CD8-positive, alpha-beta T cell (primary cell): ENCODE measurements at regions of chr3 and their contacts with region 1.

Region 1: GRCh38 chr3:15629860-15630597 is 28.5 kb downstream of the BTD start:
- DNase-seq: peak; percentile 34 to 87 (median 60)
- ATAC-seq: peak; percentile 100
- H3K4me3 ChIP-seq: no peak overlapping the region
- H3K4me3 Mint-ChIP-seq: peak overlapping the region; percentile 64
- H3K27ac ChIP-seq: no peak overlapping the region
- H3K27ac Mint-ChIP-seq: peak overlapping the region; percentile 16
- H3K4me1 ChIP-seq: peaks cover 3% of the 10 kb centered on the region
- H3K4me1 Mint-ChIP-seq: peaks cover 23% of the 10 kb centered on the region
- H3K27me3 ChIP-seq: no peaks in the 10 kb centered on the region
- H3K27me3 Mint-ChIP-seq: no peaks in the 10 kb centered on the region
- CTCF ChIP-seq: peak; percentile 60

Region 2: GRCh38 chr3:15673536-15673935 is 43.5 kb after region 1 on chr3:
- CTCF ChIA-PET with region 1: interaction called, 11 read pairs
- POLR2A ChIA-PET with region 1: no interaction called
- intact Hi-C with region 1: loop called (anchors 2 to 5 kb)
- DNase-seq: no peak
- ATAC-seq: no peak
- H3K4me3 ChIP-seq: no peak overlapping the region
- H3K4me3 Mint-ChIP-seq: no peak overlapping the region
- H3K27ac ChIP-seq: no peak overlapping the region
- H3K27ac Mint-ChIP-seq: no peak overlapping the region
- H3K4me1 ChIP-seq: no peaks in the 10 kb centered on the region
- H3K4me1 Mint-ChIP-seq: peaks cover 5% of the 10 kb centered on the region
- H3K27me3 ChIP-seq: no peaks in the 10 kb centered on the region
- H3K27me3 Mint-ChIP-seq: no peaks in the 10 kb centered on the region
- CTCF ChIP-seq: no peak

Region 3: DNA sequence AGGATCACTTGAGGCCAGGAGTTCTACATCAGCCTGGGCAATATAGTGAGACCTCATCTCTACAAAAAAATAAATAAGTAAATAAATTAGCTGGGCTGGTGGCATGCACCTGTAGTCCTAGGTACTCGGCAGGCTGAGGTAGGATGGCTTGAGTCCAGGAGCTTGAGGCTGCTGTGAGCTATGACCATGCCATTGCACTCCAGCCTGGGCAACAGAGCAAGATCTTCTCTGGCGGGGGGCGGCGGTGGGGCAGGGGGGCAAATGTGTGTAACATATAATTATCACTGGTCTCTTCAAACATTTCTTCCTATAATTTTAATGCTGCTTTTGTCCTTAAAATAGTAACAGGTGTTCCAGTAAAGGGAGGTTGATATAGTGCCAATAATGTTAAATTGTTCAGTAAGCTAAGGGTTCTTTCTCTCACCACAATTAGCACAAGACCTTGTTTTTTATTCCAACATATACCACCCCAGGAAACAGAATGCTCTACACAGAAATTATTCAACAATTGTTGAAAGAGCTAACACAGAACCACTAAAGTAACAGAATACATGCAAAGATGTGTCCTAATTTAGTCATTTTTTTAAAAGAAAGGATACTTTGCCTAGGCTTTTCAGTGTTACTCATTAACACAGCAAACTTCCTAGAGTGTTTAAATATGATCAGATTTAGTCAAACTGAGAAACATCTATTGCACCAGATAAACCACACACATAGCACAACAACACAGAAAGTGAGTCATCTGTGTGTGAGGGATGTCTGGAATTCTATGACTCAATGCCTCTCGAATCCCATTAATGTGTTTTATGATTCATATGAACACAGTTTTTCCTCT is 138.6 kb after region 1 on chr3:
- CTCF ChIA-PET with region 1: no interaction called
- POLR2A ChIA-PET with region 1: no interaction called
- intact Hi-C with region 1: no loop called
- DNase-seq: peak in 1 of 9 experiments; percentile 11
- ATAC-seq: no peak
- H3K4me3 ChIP-seq: no peak overlapping the region
- H3K4me3 Mint-ChIP-seq: no peak overlapping the region
- H3K27ac ChIP-seq: no peak overlapping the region
- H3K27ac Mint-ChIP-seq: no peak overlapping the region
- H3K4me1 ChIP-seq: no peaks in the 10 kb centered on the region
- H3K4me1 Mint-ChIP-seq: peaks cover 16% of the 10 kb centered on the region
- H3K27me3 ChIP-seq: no peaks in the 10 kb centered on the region
- H3K27me3 Mint-ChIP-seq: no peaks in the 10 kb centered on the region
- CTCF ChIP-seq: no peak

Region 4: GRCh38 chr3:15787526-15787925 is 157.5 kb after region 1 on chr3:
- CTCF ChIA-PET with region 1: no interaction called
- POLR2A ChIA-PET with region 1: no interaction called
- intact Hi-C with region 1: no loop called
- DNase-seq: no peak
- ATAC-seq: no peak
- H3K4me3 ChIP-seq: no peak overlapping the region
- H3K4me3 Mint-ChIP-seq: no peak overlapping the region
- H3K27ac ChIP-seq: no peak overlapping the region
- H3K27ac Mint-ChIP-seq: no peak overlapping the region
- H3K4me1 ChIP-seq: no peaks in the 10 kb centered on the region
- H3K4me1 Mint-ChIP-seq: peaks cover 34% of the 10 kb centered on the region
- H3K27me3 ChIP-seq: no peaks in the 10 kb centered on the region
- H3K27me3 Mint-ChIP-seq: no peaks in the 10 kb centered on the region
- CTCF ChIP-seq: no peak

Region 5: DNA sequence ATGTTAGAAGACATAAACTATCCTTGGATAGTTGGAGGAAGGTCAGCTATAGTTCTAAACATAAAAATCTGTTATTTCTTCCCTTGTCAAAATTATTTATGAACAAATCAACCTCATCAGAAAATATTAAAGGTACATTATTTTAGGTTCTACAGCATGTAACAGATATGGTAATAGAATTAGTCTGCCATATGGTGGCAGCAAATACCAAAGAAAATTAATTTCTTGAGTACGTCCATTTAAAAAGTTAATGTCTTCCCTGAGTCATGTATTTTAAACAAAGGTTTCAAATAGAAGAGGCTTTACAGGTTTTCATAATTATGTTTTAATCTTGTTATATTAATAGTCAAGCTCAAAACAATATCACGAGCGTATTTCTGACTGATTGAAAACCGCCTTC is 185.7 kb after region 1 on chr3:
- CTCF ChIA-PET with region 1: interaction called, 48 read pairs
- POLR2A ChIA-PET with region 1: no interaction called
- intact Hi-C with region 1: loop called (anchors 1 kb)
- DNase-seq: peak in 2 of 9 experiments; percentile 53 to 65
- ATAC-seq: no peak
- H3K4me3 ChIP-seq: no peak overlapping the region
- H3K4me3 Mint-ChIP-seq: no peak overlapping the region
- H3K27ac ChIP-seq: no peak overlapping the region
- H3K27ac Mint-ChIP-seq: no peak overlapping the region
- H3K4me1 ChIP-seq: peaks cover 10% of the 10 kb centered on the region
- H3K4me1 Mint-ChIP-seq: peaks cover 40% of the 10 kb centered on the region
- H3K27me3 ChIP-seq: no peaks in the 10 kb centered on the region
- H3K27me3 Mint-ChIP-seq: no peaks in the 10 kb centered on the region
- CTCF ChIP-seq: peak; percentile 46

Region 6: GRCh38 chr3:16048435-16049318 is 418.6 kb after region 1 on chr3:
- CTCF ChIA-PET with region 1: no interaction called
- POLR2A ChIA-PET with region 1: no interaction called
- intact Hi-C with region 1: loop called in 1 of 2 experiments (anchors 5 kb)
- DNase-seq: peak in 7 of 9 experiments; percentile 18 to 66 (median 28)
- ATAC-seq: peak; percentile 71
- H3K4me3 ChIP-seq: peak overlapping the region in 1 of 2 experiments; percentile 10
- H3K4me3 Mint-ChIP-seq: peak overlapping the region; percentile 37
- H3K27ac ChIP-seq: no peak overlapping the region
- H3K27ac Mint-ChIP-seq: no peak overlapping the region
- H3K4me1 ChIP-seq: no peaks in the 10 kb centered on the region
- H3K4me1 Mint-ChIP-seq: peaks cover 3% of the 10 kb centered on the region
- H3K27me3 ChIP-seq: peaks cover 0 to 3% of the 10 kb centered on the region in 2 experiments
- H3K27me3 Mint-ChIP-seq: peaks cover under 1% of the 10 kb centered on the region
- CTCF ChIP-seq: peak; percentile 73

Region 7: DNA sequence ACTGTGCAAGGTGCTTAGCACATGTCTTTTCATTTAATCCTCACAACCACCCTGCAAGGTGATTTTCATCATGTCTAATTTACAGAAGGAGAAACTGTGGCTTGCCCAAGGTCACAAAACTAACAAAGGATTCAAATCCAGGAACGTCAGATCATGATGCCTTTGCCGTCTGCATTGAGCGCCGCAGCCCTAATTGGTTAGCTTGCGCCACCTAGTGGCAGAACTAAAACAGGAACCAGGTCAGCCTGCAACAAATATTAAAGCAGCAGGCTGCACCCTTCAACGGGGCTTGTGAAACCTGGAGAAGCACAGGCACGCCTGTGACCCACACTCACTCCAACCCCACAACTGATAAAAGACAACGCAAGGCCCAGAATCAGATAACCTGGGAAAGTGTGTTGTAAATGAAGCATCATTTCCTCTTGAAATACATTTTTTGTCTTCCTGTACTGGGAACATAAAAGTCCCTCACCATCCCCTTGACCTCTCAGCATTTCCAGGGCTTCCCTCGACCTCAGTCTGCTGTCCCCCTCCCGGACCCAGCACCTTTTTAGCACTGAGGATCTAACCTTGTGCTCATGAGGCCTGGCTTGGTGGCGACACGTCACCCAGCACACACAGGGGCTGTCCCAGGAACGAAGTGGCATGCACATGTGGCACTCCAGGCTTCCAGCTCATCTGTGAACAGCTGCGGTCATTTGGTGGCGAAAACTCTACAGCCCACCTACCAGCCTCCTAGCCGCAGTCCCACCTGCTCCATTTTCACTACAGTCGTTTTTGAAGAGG is 617.4 kb after region 1 on chr3:
- CTCF ChIA-PET with region 1: interaction called, 3 read pairs
- POLR2A ChIA-PET with region 1: no interaction called
- intact Hi-C with region 1: loop called (anchors 1 kb)
- DNase-seq: peak; percentile 54 to 86 (median 76)
- ATAC-seq: peak; percentile 90
- H3K4me3 ChIP-seq: no peak overlapping the region
- H3K4me3 Mint-ChIP-seq: no peak overlapping the region
- H3K27ac ChIP-seq: no peak overlapping the region
- H3K27ac Mint-ChIP-seq: no peak overlapping the region
- H3K4me1 ChIP-seq: no peaks in the 10 kb centered on the region
- H3K4me1 Mint-ChIP-seq: peaks cover 7% of the 10 kb centered on the region
- H3K27me3 ChIP-seq: no peaks in the 10 kb centered on the region
- H3K27me3 Mint-ChIP-seq: peaks cover 4% of the 10 kb centered on the region
- CTCF ChIP-seq: peak; percentile 79